HCT116 (cell line): ENCODE measurements at regions of chr17 and their contacts with region 1.

Region 1: GRCh38 chr17:72430611-72431432 is 310.0 kb downstream of the SOX9 start:
- DNase-seq: peak; percentile 56
- ATAC-seq: peak; percentile 87
- H3K4me3 ChIP-seq: peak overlapping the region; percentile 21 to 22
- H3K27ac ChIP-seq: peak overlapping the region; percentile 36
- H3K4me1 ChIP-seq: peaks cover 46 to 83% of the 10 kb centered on the region in 2 experiments
- H3K27me3 ChIP-seq: no peaks in the 10 kb centered on the region
- CTCF ChIP-seq: peak; percentile 63 to 74 (median 68); a peak in 5 of 6 replicates
- POLR2A ChIP-seq: no peak
- RAD21 ChIP-seq: peak; percentile 81

Region 2: GRCh38 chr17:71472809-71473789 is 957.7 kb before region 1 on chr17:
- CTCF ChIA-PET with region 1: no interaction called
- POLR2A ChIA-PET with region 1: no interaction called
- RAD21 ChIA-PET with region 1: no interaction called
- intact Hi-C with region 1: loop called (anchors 5 kb)
- DNase-seq: peak; percentile 86
- ATAC-seq: peak; percentile 99
- H3K4me3 ChIP-seq: no peak overlapping the region
- H3K27ac ChIP-seq: no peak overlapping the region
- H3K4me1 ChIP-seq: peaks cover 0 to 11% of the 10 kb centered on the region in 2 experiments; a peak in 2 of 4 replicates
- H3K27me3 ChIP-seq: no peaks in the 10 kb centered on the region
- CTCF ChIP-seq: peak; percentile 79 to 93 (median 88)
- POLR2A ChIP-seq: no peak
- RAD21 ChIP-seq: peak; percentile 89

Region 3: DNA sequence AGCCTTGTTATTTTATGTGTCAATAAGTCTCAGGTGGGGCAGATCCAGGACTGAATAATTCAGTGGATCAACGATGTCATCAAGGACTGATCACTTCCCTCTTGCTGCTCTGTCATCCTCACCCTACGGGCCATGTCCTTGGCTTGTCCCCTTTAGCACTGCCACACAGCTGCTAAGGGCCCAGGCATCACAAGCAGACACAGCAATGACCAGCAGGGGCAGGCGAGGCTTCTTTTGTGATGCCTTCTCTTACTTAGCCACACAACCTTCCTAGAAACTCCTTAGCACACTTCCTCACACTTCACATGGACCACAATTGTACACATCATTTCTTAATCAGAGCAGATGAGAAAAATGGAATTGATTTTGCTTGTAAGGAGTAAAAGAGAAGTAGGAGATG is 666.3 kb before region 1 on chr17:
- CTCF ChIA-PET with region 1: no interaction called
- POLR2A ChIA-PET with region 1: no interaction called
- RAD21 ChIA-PET with region 1: no interaction called
- intact Hi-C with region 1: loop called (anchors 10 kb)
- DNase-seq: peak; percentile 62
- ATAC-seq: peak; percentile 100
- H3K4me3 ChIP-seq: no peak overlapping the region
- H3K27ac ChIP-seq: no peak overlapping the region
- H3K4me1 ChIP-seq: peaks cover 0 to 9% of the 10 kb centered on the region in 2 experiments; a peak in 2 of 4 replicates
- H3K27me3 ChIP-seq: no peaks in the 10 kb centered on the region
- CTCF ChIP-seq: peak; percentile 56 to 96 (median 92); a peak in 5 of 6 replicates
- POLR2A ChIP-seq: no peak
- RAD21 ChIP-seq: peak; percentile 81

Region 4: GRCh38 chr17:71959154-71959553 is 471.7 kb before region 1 on chr17:
- CTCF ChIA-PET with region 1: no interaction called
- POLR2A ChIA-PET with region 1: no interaction called
- RAD21 ChIA-PET with region 1: no interaction called
- intact Hi-C with region 1: loop called (anchors 1 kb)
- DNase-seq: peak; percentile 49
- ATAC-seq: peak; percentile 92
- H3K4me3 ChIP-seq: no peak overlapping the region
- H3K27ac ChIP-seq: no peak overlapping the region
- H3K4me1 ChIP-seq: no peaks in the 10 kb centered on the region
- H3K27me3 ChIP-seq: no peaks in the 10 kb centered on the region
- CTCF ChIP-seq: peak; percentile 58 to 84 (median 77); a peak in 5 of 6 replicates
- POLR2A ChIP-seq: no peak
- RAD21 ChIP-seq: peak; percentile 71

Region 5: DNA sequence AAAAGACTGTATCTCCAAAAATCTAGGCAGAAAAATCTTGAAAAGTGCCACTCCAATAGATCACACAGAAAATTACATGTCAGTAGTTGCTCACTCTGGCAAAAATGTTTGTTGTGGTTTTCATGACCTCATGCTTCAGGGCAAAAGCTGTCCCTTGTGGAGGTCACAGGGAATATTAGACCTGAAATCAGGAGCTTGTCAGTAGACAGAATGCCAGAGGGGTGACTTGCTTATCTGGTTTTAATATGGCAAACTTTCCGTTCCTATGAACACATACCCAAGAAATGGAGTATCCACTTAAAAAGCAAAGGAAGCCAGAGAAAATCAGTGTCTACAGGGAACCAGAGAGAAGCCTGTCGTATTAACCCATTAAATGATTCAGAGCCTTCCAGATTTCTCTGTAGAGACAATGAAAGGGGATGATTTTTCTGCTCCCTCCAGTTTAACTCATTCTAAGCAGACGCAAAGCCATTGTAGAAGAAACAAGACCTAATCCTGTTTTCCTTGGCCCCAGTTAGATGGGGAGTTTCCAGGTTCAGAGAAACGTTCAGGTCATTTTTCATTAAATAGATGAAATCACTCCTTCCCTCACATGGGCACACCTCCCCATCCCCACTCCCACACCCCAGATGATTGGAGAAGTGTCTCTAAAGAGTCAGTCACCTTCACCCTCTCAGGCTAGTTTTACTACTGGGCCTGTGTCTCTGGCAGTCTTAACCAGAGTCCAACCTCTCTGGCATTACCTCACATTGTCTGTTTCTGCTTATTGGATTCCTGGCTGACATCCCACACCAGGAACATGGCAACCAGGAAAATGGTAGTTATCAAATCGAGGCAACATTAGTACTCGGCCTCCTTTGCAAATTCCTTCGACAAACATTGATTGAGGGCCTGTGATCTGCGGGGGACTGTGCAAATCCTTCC is 304.0 kb before region 1 on chr17:
- CTCF ChIA-PET with region 1: interaction called, 16 read pairs
- POLR2A ChIA-PET with region 1: no interaction called
- RAD21 ChIA-PET with region 1: no interaction called
- intact Hi-C with region 1: no loop called
- DNase-seq: peak; percentile 91
- ATAC-seq: peak; percentile 77
- H3K4me3 ChIP-seq: no peak overlapping the region
- H3K27ac ChIP-seq: peak overlapping the region; percentile 31; the same call in 1 of the 2 replicates
- H3K4me1 ChIP-seq: peaks cover 36 to 55% of the 10 kb centered on the region in 2 experiments
- H3K27me3 ChIP-seq: no peaks in the 10 kb centered on the region
- CTCF ChIP-seq: peak in 1 of 3 experiments; percentile 24; a peak in 1 of 6 replicates
- POLR2A ChIP-seq: no peak
- RAD21 ChIP-seq: peak; percentile 43

Region 6: GRCh38 chr17:72136693-72137092 is 294.1 kb before region 1 on chr17:
- CTCF ChIA-PET with region 1: interaction called, 10 read pairs
- POLR2A ChIA-PET with region 1: no interaction called
- RAD21 ChIA-PET with region 1: no interaction called
- intact Hi-C with region 1: no loop called
- DNase-seq: peak; percentile 61
- ATAC-seq: peak; percentile 68
- H3K4me3 ChIP-seq: no peak overlapping the region
- H3K27ac ChIP-seq: no peak overlapping the region
- H3K4me1 ChIP-seq: peaks cover 16 to 34% of the 10 kb centered on the region in 2 experiments
- H3K27me3 ChIP-seq: peaks cover 11% of the 10 kb centered on the region; the same call in 1 of the 2 replicates
- CTCF ChIP-seq: no peak
- POLR2A ChIP-seq: no peak
- RAD21 ChIP-seq: peak; percentile 12; the same call in 1 of the 2 replicates

Region 7: DNA sequence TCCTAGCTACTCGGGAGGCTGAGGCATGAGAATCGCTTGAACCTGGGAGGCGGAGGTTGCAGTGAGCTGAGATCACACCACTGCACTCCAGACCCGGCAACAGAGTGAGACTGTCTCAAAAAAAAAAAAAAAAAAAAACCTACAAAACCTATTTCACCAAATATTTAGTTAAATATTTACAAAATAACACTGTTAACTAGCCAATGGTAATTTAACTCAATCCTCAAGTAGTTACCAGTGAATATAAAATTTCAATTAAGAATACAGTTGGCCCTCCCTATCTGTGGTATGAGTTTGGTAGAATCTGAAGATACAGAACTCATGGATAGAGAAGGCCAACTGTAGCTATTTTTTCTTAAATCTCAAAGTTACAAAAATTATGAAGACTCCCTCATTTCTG is 62.6 kb before region 1 on chr17:
- CTCF ChIA-PET with region 1: no interaction called
- POLR2A ChIA-PET with region 1: no interaction called
- RAD21 ChIA-PET with region 1: no interaction called
- intact Hi-C with region 1: no loop called
- DNase-seq: no peak
- ATAC-seq: no peak
- H3K4me3 ChIP-seq: no peak overlapping the region
- H3K27ac ChIP-seq: no peak overlapping the region
- H3K4me1 ChIP-seq: peaks cover 12 to 31% of the 10 kb centered on the region in 2 experiments
- H3K27me3 ChIP-seq: no peaks in the 10 kb centered on the region
- CTCF ChIP-seq: no peak
- POLR2A ChIP-seq: no peak
- RAD21 ChIP-seq: no peak